ENCODE measurements at regions of chr9 and their contacts with region 1.

Region 1: DNA sequence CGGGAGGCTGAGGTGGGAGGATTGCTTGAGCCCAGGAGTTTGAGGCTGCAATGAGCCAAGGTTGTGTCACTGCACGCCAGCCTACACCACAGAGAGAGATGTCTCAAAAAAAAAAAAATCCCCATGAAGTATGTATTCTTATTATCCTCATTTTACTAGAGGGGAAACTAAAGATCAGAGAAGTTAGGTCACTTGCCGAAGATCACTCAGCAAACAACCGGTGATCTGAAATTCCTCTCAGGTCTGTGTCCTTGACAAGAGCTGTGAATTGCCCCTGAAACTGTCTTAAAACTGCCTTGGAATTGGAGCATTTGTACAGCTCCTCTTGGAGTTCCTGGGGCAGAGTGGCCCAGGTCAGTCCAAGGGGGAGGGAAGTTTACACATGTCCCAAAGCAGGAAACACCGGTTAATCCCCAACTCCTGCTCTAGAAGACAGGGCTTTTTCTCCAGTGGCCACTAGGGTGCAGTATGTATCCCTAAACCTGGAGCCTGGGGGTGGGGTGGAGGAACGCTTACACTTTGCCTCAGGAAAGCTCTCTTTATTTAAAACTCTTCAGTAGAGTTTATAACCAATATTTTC is 27.6 kb downstream of the AQP7 start:
- DNase-seq: peak; percentile 29 to 76 (median 70)
- ATAC-seq: peak; percentile 94
- H3K4me3 ChIP-seq: no peak overlapping the region
- H3K4me3 Mint-ChIP-seq: peak overlapping the region in 9 of 10 donors; percentile 19 to 81 (median 75)
- H3K27ac ChIP-seq: peak overlapping the region; percentile 0
- H3K27ac Mint-ChIP-seq: peak overlapping the region in 8 of 9 donors; percentile 49 to 87 (median 76)
- H3K4me1 ChIP-seq: peaks cover 0 to 5% of the 10 kb centered on the region in 2 donors
- H3K4me1 Mint-ChIP-seq: peaks cover 10 to 17% (median 13%) of the 10 kb centered on the region in 7 donors
- H3K27me3 ChIP-seq: no peaks in the 10 kb centered on the region
- H3K27me3 Mint-ChIP-seq: no peaks in the 10 kb centered on the region

Region 2: DNA sequence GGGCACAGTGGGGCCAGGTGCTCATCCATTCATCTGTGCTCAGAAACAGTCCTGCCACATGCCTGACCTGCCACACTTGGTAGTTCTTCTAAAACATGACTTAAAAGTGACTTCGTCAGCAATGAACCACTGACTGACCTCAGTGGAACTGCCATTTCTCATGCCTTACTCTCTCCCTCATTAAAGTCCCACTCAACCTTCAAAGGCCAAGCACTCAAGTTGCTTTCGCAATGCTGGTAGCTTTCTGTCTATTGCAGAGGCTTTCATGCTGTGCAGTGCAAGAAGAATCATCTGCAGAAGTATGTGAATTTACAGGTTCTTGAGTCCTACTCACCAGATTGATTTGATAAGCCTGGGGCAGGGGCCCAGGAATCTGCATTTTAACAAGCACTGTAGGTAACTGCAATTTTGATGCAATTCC is 231.5 kb before region 1 on chr9:
- CTCF ChIA-PET with region 1: no interaction called
- POLR2A ChIA-PET with region 1: no interaction called
- intact Hi-C with region 1: no loop called
- DNase-seq: peak in 1 of 9 donors; percentile 17
- ATAC-seq: peak; percentile 33
- H3K4me3 ChIP-seq: no peak overlapping the region
- H3K4me3 Mint-ChIP-seq: peak overlapping the region; percentile 27 to 94 (median 78)
- H3K27ac ChIP-seq: peak overlapping the region; percentile 1
- H3K27ac Mint-ChIP-seq: peak overlapping the region; percentile 52 to 98 (median 84)
- H3K4me1 ChIP-seq: peaks cover 63 to 83% of the 10 kb centered on the region in 2 donors
- H3K4me1 Mint-ChIP-seq: peaks cover 54 to 98% (median 87%) of the 10 kb centered on the region in 7 donors
- H3K27me3 ChIP-seq: no peaks in the 10 kb centered on the region
- H3K27me3 Mint-ChIP-seq: no peaks in the 10 kb centered on the region

Region 3: DNA sequence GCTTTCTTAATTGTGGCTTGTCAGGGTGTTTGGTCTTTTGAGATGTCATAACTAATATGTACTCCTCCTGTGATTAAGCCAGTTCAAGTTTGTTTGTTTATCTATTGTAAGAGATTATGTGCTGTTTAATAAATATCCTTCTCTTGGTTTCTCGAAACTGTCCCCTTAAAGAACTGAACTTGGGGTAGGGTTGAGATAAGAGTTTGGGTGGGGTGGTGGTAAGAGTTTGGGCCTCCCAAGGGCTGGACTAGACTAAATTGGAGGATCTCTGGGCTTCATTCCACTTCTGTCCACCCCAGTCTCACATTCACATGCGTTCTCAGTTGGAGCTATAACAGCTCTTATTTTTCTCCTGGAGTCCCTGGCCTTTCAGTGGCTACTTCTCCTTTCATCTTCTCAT is 10.6 kb before region 1 on chr9:
- CTCF ChIA-PET with region 1: interaction called, 11 read pairs
- POLR2A ChIA-PET with region 1: interaction called, 4 read pairs
- intact Hi-C with region 1: no loop called
- DNase-seq: no peak
- ATAC-seq: no peak
- H3K4me3 ChIP-seq: no peak overlapping the region
- H3K4me3 Mint-ChIP-seq: no peak overlapping the region
- H3K27ac ChIP-seq: no peak overlapping the region
- H3K27ac Mint-ChIP-seq: peak overlapping the region in 4 of 9 donors; percentile 13 to 26 (median 19)
- H3K4me1 ChIP-seq: no peaks in the 10 kb centered on the region
- H3K4me1 Mint-ChIP-seq: no peaks in the 10 kb centered on the region
- H3K27me3 ChIP-seq: no peaks in the 10 kb centered on the region
- H3K27me3 Mint-ChIP-seq: no peaks in the 10 kb centered on the region

Region 4: DNA sequence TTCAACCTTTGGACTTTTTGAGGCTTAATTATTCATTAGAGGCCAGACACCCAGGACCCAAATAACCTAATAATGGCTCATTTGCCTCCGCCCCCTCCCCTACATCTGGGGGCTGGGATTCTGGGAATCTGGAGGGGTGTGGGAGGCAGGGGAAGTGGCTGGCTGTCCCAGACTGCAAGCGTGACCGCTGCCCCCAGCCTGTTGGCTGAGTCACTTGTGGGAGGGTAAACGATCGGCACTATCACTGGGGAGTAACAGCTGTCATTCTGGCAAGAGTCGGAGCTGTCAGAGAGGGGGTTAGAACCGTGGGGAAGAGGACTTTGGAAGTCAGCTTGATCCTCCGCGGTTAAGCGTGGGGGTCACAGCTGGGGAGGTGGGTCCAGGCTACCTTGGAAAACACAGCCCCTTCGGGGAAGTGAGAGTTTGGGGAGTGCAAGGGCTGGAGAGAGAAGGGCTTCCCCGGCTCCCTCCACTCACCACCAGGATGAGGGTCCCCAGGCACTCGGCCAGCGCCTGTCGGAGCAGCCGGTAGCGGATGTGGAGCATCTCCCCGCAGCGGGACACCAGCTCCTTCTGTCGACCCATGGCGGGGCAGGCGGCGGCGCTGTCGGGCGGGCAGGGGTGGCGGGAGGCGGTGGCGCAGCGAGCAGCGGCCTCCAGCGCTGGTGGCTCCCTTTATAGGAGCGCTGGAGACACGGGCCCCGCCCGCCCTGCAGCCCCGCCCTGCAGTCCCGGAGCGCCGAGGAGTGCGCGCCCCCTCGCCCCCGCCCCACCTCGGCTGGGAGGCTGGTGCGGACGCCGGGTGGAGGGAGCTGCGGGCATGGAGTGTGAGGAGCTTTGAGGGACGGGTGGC is 72.4 kb after region 1 on chr9 and contains the start of gene AQP3:
- CTCF ChIA-PET with region 1: interaction called, 14 read pairs
- POLR2A ChIA-PET with region 1: interaction called, 4 read pairs
- intact Hi-C with region 1: loop called in 1 of 2 experiments (anchors 1 kb)
- DNase-seq: peak; percentile 59 to 77 (median 72)
- ATAC-seq: peak; percentile 79
- H3K4me3 ChIP-seq: peak within 1 kb of the TSS; percentile 86
- H3K4me3 Mint-ChIP-seq: peak within 1 kb of the TSS; percentile 89 to 98 (median 94)
- H3K27ac ChIP-seq: peak within 1 kb of the TSS; percentile 85
- H3K27ac Mint-ChIP-seq: peak within 1 kb of the TSS; percentile 81 to 97 (median 96)
- H3K4me1 ChIP-seq: peaks cover 27 to 36% of the 10 kb centered on the region in 2 donors
- H3K4me1 Mint-ChIP-seq: peaks cover 23 to 60% (median 45%) of the 10 kb centered on the region in 7 donors
- H3K27me3 ChIP-seq: no peaks in the 10 kb centered on the region
- H3K27me3 Mint-ChIP-seq: no peaks in the 10 kb centered on the region
- total RNA-seq, gene AQP3: 53.3 to 173 (median 110) TPM

Region 5: DNA sequence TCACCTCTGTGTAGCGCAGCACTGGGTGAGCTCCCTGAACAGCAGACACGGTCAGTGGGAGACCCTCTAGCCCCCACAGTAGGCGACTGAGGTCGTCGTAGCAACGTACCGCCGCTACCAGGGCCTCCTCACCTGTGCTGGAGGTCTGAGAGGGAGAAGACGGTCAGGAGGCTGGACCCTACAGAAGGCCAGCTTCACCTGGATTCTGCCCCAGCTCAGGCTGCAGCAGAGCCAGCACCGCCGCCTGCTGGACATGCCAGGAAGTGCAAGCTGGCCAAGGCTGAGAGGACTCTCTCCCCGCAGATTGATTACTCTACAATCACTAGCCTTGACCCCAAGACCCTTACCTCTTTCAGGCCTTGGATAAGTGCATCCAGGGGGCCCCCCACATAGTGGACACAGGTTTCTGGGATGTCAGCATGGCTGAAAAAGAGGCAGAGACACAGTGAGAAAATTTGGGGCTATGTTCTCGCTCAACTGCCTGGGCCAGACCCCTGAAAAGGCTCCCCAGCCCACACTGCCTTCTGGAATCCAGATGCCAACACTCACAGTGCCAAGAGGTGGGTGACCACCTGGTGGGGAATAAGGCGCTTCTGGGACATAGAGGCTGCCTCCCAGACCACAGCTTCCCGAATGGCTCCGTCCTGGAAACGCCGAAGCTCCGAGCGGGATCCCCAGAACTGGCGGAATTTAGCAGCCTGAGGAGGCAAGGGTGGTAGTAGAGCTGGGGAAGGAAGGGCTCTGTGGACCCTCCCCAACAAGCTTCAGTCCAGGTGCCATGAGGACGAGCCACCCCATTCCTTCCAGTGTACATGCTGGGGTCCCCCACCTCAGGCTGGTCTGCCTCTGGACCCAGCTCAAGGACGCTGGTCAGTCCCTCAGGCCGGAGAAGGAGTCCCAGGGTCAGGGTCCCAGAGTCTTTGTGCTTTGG is 92.1 kb after region 1 on chr9:
- CTCF ChIA-PET with region 1: interaction called, 51 read pairs
- POLR2A ChIA-PET with region 1: interaction called, 12 read pairs
- intact Hi-C with region 1: loop called (anchors 1 to 2 kb)
- DNase-seq: peak; percentile 42 to 82 (median 67)
- ATAC-seq: peak; percentile 84
- H3K4me3 ChIP-seq: no peak overlapping the region
- H3K4me3 Mint-ChIP-seq: peak overlapping the region in 1 of 10 donors; percentile 31
- H3K27ac ChIP-seq: peak overlapping the region; percentile 18
- H3K27ac Mint-ChIP-seq: peak overlapping the region in 6 of 9 donors; percentile 31 to 76 (median 43)
- H3K4me1 ChIP-seq: no peaks in the 10 kb centered on the region
- H3K4me1 Mint-ChIP-seq: peaks cover 5 to 12% (median 7%) of the 10 kb centered on the region in 7 donors
- H3K27me3 ChIP-seq: no peaks in the 10 kb centered on the region
- H3K27me3 Mint-ChIP-seq: no peaks in the 10 kb centered on the region

Region 6: GRCh38 chr9:33498387-33498786 is 123.7 kb after region 1 on chr9:
- CTCF ChIA-PET with region 1: interaction called, 5 read pairs
- POLR2A ChIA-PET with region 1: no interaction called
- intact Hi-C with region 1: loop called in 1 of 2 experiments (anchors 1 kb)
- DNase-seq: peak in 1 of 9 donors; percentile 15
- ATAC-seq: no peak
- H3K4me3 ChIP-seq: no peak overlapping the region
- H3K4me3 Mint-ChIP-seq: no peak overlapping the region
- H3K27ac ChIP-seq: no peak overlapping the region
- H3K27ac Mint-ChIP-seq: no peak overlapping the region
- H3K4me1 ChIP-seq: no peaks in the 10 kb centered on the region
- H3K4me1 Mint-ChIP-seq: peaks cover 0 to 1% (median 0%) of the 10 kb centered on the region in 7 donors
- H3K27me3 ChIP-seq: no peaks in the 10 kb centered on the region
- H3K27me3 Mint-ChIP-seq: peaks cover 0 to 11% (median 0%) of the 10 kb centered on the region in 5 donors

Region 7: GRCh38 chr9:33721674-33722358 is 347.1 kb after region 1 on chr9:
- CTCF ChIA-PET with region 1: interaction called, 11 read pairs
- POLR2A ChIA-PET with region 1: no interaction called
- intact Hi-C with region 1: loop called in 1 of 2 experiments (anchors 1 kb)
- DNase-seq: peak; percentile 68 to 90 (median 86)
- ATAC-seq: peak; percentile 93
- H3K4me3 ChIP-seq: no peak overlapping the region
- H3K4me3 Mint-ChIP-seq: peak overlapping the region in 1 of 10 donors; percentile 32
- H3K27ac ChIP-seq: no peak overlapping the region
- H3K27ac Mint-ChIP-seq: peak overlapping the region in 3 of 9 donors; percentile 22 to 55 (median 49)
- H3K4me1 ChIP-seq: no peaks in the 10 kb centered on the region
- H3K4me1 Mint-ChIP-seq: peaks cover 0 to 4% (median 0%) of the 10 kb centered on the region in 7 donors
- H3K27me3 ChIP-seq: no peaks in the 10 kb centered on the region
- H3K27me3 Mint-ChIP-seq: peaks cover 5 to 27% (median 13%) of the 10 kb centered on the region in 5 donors

Measured in naive thymus-derived CD4-positive, alpha-beta T cell (primary cell).